ENCODE measurements at regions of chr2 and their contacts with region 1.

Region 1: DNA sequence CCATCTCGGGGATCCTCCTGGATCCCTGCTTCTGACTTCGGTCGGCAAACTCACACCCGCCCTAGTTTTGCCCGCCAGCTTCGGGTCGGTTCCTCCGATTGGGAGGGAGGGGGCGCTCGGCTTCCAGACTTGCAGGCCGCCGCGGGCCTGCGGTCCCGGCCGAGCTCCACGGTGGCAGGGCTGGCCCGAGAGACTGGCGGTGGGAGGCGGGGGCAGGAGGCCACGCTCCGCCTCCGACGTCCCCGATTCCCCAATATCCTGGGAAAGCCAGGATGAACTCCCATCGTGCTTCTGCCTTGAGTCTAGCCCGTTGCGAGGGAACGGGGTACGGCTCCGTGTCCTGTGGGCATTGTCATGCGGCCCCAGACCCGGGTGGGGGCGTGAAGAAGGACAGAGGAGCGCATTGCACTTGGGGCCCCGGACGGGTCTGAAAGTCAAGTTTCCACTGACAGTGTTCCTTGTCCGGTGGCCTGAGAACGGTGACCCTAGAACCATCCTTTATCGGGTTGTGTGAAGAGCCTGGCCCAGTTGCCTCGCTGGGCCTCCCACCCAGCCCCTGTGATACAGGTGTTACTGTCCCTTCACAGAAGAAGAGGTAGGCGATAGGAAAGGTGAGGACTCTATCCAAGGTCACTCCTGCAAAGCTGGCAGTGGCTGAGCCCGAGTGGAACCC is 2.4 kb upstream of the INHBB start:
- DNase-seq: peak; percentile 84
- ATAC-seq: peak; percentile 71
- H3K4me3 Mint-ChIP-seq: peak overlapping the region; percentile 21
- H3K27ac Mint-ChIP-seq: no peak overlapping the region
- H3K4me1 Mint-ChIP-seq: peaks cover 22% of the 10 kb centered on the region
- H3K27me3 Mint-ChIP-seq: peaks cover 48% of the 10 kb centered on the region

Region 2: DNA sequence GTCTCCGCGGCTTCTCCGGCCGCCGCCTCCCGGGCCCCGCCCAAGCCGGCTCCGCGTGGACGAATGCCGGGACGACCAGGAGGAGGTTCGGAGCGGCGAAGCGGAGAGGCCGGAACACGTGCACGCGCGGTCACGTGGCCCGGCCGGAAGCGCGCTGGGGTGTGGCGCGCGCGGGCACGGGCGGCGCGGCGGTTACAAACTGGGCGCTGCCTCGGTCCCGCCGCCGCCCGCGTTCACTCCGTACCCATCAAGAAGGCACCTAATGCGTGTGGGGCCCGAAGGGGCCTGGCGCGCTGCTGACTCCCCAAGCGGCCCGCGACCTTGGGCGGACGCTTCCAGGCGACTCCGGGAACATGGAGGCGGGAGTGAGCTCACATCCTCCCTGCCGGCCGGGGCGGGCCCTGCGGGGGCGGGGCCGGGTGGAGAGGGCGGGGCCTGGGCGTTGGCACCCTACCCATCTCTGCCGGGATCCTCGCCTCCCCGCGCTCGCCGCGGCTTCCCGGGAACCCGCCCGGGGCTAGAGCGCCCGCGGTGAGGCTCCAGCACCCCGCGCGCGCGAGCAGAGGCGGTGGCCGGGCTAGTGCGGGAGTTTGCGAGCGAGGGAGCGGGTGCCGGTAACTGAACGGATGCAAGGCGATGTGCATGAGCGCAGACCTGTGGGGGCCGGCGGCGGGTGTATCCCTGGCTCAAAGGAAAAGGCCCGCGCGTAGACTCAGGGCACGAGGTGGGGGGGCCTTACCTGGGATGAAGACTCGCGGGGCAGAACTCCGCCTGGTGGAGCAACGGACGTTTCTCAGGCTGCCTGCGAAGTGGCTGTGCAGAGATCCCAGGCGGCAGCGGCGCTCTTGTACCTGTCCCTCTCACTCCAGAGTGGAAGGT is 120.3 kb before region 1 on chr2 and contains the start of gene TMEM185B:
- CTCF ChIA-PET with region 1: no interaction called
- POLR2A ChIA-PET with region 1: no interaction called
- intact Hi-C with region 1: no loop called
- DNase-seq: peak; percentile 95
- ATAC-seq: peak; percentile 90
- H3K4me3 Mint-ChIP-seq: peak within 1 kb of the TSS; percentile 76
- H3K27ac Mint-ChIP-seq: peak within 1 kb of the TSS; percentile 93
- H3K4me1 Mint-ChIP-seq: peaks cover 50% of the 10 kb centered on the region
- H3K27me3 Mint-ChIP-seq: no peaks in the 10 kb centered on the region
- total RNA-seq, gene TMEM185B: 15.9 to 17.3 TPM

Region 3: GRCh38 chr2:120283649-120284048 is 59.9 kb before region 1 on chr2:
- CTCF ChIA-PET with region 1: no interaction called
- POLR2A ChIA-PET with region 1: no interaction called
- intact Hi-C with region 1: no loop called
- DNase-seq: no peak
- ATAC-seq: no peak
- H3K4me3 Mint-ChIP-seq: no peak overlapping the region
- H3K27ac Mint-ChIP-seq: no peak overlapping the region
- H3K4me1 Mint-ChIP-seq: peaks cover 22% of the 10 kb centered on the region
- H3K27me3 Mint-ChIP-seq: no peaks in the 10 kb centered on the region

Region 4: DNA sequence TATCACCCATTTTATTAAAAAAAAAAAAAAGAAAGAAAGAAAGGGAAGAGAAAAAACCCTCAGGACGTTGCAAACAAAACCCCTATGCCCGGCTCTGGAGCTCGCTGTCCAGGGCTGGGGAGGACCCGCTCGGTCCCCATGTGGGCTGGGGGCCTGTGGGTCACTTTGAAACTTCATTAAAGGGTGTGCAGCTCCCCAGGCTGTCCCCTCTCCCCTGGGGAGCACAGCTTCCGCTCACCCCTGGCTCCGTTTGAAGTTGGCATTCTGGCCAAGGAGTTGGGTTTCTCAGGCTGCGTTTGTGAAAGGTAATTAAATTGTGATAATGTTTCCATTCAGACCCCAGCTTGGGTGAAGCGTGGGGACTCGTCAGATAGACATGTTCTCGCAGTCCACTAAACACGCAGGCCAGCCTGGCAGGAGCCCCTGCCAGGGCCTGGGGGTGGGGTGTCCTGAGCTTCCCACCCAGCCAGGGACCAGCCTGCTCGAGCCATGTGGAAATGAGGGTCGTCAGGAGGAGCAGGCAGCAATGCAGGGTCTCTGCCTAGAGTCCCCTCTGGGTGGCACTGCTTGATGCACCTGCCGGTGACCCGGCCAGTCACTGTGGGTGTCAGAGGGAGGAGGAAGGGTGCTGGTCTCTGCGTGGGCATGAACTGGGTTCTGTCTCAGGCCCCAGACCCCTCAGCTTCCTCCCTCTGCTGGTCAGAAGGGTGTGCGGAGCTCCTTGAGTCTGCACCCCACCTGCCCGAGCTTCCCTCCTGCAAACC is 168.6 kb after region 1 on chr2:
- CTCF ChIA-PET with region 1: no interaction called
- POLR2A ChIA-PET with region 1: no interaction called
- intact Hi-C with region 1: loop called in 1 of 2 experiments (anchors 10 kb)
- DNase-seq: no peak
- ATAC-seq: no peak
- H3K4me3 Mint-ChIP-seq: no peak overlapping the region
- H3K27ac Mint-ChIP-seq: no peak overlapping the region
- H3K4me1 Mint-ChIP-seq: no peaks in the 10 kb centered on the region
- H3K27me3 Mint-ChIP-seq: no peaks in the 10 kb centered on the region

Region 5: GRCh38 chr2:120552800-120553481 is 209.4 kb after region 1 on chr2:
- CTCF ChIA-PET with region 1: interaction called, 9 read pairs
- POLR2A ChIA-PET with region 1: no interaction called
- intact Hi-C with region 1: loop called in 1 of 2 experiments (anchors 1 kb)
- DNase-seq: peak; percentile 71
- ATAC-seq: peak; percentile 77
- H3K4me3 Mint-ChIP-seq: no peak overlapping the region
- H3K27ac Mint-ChIP-seq: no peak overlapping the region
- H3K4me1 Mint-ChIP-seq: peaks cover 3% of the 10 kb centered on the region
- H3K27me3 Mint-ChIP-seq: peaks cover 20% of the 10 kb centered on the region

Region 6: DNA sequence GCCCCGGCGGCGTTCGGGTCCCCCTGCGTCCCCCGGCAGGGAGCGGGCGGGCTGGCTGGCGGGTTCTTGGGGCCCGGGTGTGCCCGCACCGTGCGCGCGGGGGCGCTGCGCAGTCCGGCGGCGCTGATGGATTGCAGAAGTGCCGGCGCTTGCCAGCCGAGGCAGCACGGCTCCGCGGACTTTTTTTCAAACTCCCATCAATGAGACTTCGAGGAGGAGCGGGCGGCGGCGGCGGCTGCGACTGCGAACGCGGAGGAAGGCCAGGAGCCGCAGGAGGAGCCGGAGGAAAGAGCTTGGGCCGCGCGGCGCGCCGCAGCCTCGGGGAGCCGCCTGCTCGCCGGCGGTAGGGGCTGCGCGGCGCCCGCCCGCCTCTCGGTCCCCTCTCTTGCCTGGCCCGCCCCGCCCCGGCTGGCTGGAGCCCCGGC is 392.2 kb after region 1 on chr2 and contains the start of gene GLI2:
- CTCF ChIA-PET with region 1: no interaction called
- POLR2A ChIA-PET with region 1: no interaction called
- intact Hi-C with region 1: loop called in 1 of 2 experiments (anchors 5 kb)
- DNase-seq: peak; percentile 74
- ATAC-seq: peak; percentile 87
- H3K4me3 Mint-ChIP-seq: peak within 1 kb of the TSS; percentile 40
- H3K27ac Mint-ChIP-seq: no peak within 1 kb of the TSS
- H3K4me1 Mint-ChIP-seq: peaks cover 6% of the 10 kb centered on the region
- H3K27me3 Mint-ChIP-seq: peaks cover 64% of the 10 kb centered on the region
- total RNA-seq, gene GLI2: not detected

Measured in activated CD4-positive, alpha-beta T cell treated with anti-CD3 and anti-CD28 coated beads for 36 hours (primary cell).